ENCODE measurements at regions of chr21 and their contacts with region 1.

Region 1: DNA sequence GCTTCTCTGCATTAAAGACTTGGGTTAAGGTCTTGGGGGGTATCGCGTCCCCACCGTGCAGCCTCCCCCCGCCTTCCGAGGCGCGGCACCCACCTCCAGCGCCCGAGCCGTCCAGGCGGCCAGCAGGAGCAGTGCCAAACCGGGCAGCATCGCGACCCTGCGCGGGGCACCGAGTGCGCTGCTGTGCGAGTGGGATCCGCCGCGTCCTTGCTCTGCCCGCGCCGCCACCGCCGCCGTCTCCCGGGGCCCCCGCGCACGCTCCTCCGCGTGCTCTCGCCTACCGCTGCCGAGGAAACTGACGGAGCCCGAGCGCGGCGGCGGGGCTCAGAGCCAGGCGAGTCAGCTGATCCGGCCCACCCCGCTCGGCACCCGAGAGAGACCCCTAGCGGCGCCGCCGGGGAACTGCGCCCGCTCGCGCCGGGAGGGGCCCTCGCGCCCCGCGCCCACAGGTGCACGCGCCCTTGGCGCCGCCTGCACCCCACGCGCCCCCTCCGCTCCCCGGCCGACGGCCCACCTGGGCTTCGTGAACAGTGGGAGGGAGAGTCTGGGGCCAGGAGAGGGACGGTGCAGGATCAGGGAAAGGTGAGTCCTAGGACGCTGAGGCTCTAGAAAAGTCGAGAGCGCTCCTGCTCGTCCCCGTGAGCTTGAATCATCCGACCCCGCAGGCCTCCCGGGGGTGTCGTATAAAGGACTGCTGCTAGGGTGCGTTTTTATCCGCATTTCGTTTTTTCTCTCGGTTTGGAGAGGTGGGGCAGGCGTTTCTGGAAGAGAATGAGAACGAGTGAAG is at the start of gene APP:
- DNase-seq: no peak
- H3K4me3 ChIP-seq: peak within 1 kb of the TSS; percentile 80
- H3K27me3 ChIP-seq: no peaks in the 10 kb centered on the region
- CTCF ChIP-seq: peak; percentile 59
- polyA plus RNA-seq, gene APP: 778 and 964 TPM in 2 replicates

Region 2: DNA sequence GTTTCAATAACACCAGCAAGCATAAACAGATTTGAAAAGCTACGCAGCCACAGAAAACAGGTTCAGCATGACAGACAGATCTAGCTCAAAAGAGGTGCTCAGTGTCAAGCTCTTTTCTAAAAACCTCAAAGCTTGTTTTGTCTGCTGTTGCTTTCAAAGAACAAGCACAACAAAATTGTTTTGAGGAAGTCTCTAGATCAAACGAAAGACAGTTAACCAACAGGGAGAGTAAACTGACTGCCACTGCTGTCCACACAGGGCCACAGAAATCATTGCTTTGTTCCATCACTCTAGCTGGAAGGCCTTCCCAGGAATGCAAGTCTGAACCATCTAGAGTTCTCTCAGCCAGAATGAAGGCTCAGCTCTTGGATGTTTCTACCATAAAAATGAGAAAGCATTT is 12.9 kb before region 1 on chr21:
- CTCF ChIA-PET with region 1: interaction called, 11 read pairs
- POLR2A ChIA-PET with region 1: interaction called, 3 read pairs
- DNase-seq: no peak
- H3K4me3 ChIP-seq: no peak overlapping the region
- H3K27me3 ChIP-seq: no peaks in the 10 kb centered on the region
- CTCF ChIP-seq: no peak

Region 3: DNA sequence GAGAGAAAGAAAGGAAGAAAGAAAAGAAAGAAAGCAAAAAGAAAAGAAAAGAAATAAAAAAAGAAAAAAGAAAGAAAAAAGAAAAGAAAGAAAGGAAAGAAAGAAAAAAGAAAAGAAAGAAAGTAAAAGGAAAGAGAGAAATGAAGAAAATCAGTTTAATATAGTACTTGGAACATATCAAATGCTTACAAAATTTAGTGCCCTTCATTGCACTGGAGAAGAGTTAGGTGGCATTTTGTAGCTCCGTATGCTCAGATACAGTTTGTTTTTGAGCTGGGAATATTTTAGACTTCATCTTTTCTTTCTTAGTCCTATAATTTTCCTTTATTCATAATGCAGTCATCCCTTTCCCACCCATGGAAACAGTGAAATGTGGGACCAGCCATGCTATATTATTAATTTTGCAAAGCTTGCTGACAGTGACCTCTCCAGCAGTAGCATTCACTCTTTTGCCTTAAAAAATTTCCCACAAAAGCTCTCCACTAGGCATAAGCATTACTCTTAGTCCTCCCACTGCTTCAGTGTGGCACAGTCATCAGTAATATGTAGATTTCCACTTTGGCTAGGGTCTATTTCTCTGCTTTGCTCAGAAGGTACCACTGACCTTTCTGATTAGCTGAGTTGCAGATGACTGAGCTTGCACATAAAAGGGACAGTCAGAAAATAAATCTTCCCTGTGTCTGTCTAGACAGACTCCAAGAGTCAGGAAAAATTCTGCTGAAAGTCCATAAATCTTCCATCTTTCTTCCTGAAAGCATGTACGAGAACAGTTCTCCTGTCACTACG is 56.3 kb after region 1 on chr21:
- CTCF ChIA-PET with region 1: no interaction called
- POLR2A ChIA-PET with region 1: no interaction called
- DNase-seq: no peak
- H3K4me3 ChIP-seq: no peak overlapping the region
- H3K27me3 ChIP-seq: peaks cover 3% of the 10 kb centered on the region; the same call in 1 of the 2 replicates
- CTCF ChIP-seq: no peak

Region 4: DNA sequence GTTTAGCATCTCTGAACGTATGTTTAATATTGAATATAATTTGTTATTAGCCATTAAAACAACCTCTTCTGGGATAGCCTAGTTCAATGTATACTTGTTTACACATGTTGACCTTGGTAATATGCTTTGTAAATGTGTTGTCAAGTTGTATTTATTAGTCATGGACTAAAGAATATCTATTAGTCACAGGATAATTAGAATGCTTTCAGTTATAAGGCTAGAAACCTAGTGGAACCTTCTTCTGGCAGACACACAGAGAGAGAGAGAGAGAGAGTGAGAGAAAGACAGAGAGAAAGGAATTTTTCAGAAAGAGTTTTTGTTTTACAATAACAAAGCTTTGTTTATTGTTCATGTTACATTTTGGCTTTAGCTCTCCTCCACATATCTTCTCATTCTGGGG is 181.0 kb after region 1 on chr21:
- CTCF ChIA-PET with region 1: no interaction called
- POLR2A ChIA-PET with region 1: no interaction called
- DNase-seq: no peak
- H3K4me3 ChIP-seq: no peak overlapping the region
- H3K27me3 ChIP-seq: no peaks in the 10 kb centered on the region
- CTCF ChIP-seq: no peak